Heart left ventricle (tissue), 16 donors: ENCODE measurements at regions of chr12 and their contacts with region 1.

Region 1: GRCh38 chr12:81077686-81078441 is at the start of gene ACSS3:
- DNase-seq: peak; percentile 71 to 82 (median 78)
- ATAC-seq: peak; percentile 85 to 90 (median 90)
- H3K4me3 ChIP-seq: peak within 1 kb of the TSS; percentile 59 to 93 (median 86)
- H3K27ac ChIP-seq: peak within 1 kb of the TSS; percentile 72 to 98 (median 92)
- H3K4me1 ChIP-seq: peaks cover 0 to 28% (median 8%) of the 10 kb centered on the region in 12 donors
- H3K27me3 ChIP-seq: no peaks in the 10 kb centered on the region
- CTCF ChIP-seq: no peak
- POLR2A ChIP-seq: peak in 1 of 2 donors; percentile 50
- total RNA-seq, gene ACSS3: 19.3 to 36.0 (median 28.9) TPM

Region 2: DNA sequence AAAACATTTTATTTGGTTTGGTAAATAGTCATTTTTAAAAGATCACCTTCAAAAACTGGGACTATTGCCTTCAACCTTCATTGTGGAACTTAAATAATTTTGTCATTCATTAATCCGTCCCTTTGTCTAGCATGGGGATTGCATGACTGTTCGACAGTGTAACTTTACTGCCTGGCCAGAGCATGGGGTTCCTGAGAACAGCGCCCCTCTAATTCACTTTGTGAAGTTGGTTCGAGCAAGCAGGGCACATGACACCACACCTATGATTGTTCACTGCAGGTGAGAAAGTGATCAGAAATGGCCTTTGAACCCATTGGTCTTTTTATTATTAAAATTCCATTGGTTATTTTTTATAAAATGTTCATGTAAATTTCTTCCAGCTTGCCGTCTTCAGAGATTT is 407.6 kb before region 1 on chr12:
- intact Hi-C with region 1: no loop called
- DNase-seq: no peak
- ATAC-seq: no peak
- H3K4me3 ChIP-seq: no peak overlapping the region
- H3K27ac ChIP-seq: no peak overlapping the region
- H3K4me1 ChIP-seq: no peaks in the 10 kb centered on the region
- H3K27me3 ChIP-seq: no peaks in the 10 kb centered on the region
- CTCF ChIP-seq: no peak
- POLR2A ChIP-seq: no peak

Region 3: GRCh38 chr12:80821513-80822000 is 256.3 kb before region 1 on chr12:
- intact Hi-C with region 1: loop called in 1 of 10 experiments (anchors 5 kb)
- DNase-seq: peak in 1 of 5 donors; percentile 51
- ATAC-seq: peak in 3 of 4 donors; percentile 43 to 72 (median 58)
- H3K4me3 ChIP-seq: no peak overlapping the region
- H3K27ac ChIP-seq: peak overlapping the region in 3 of 12 donors; percentile 11 to 43 (median 19)
- H3K4me1 ChIP-seq: peaks cover 0 to 24% (median 4%) of the 10 kb centered on the region in 12 donors
- H3K27me3 ChIP-seq: no peaks in the 10 kb centered on the region
- CTCF ChIP-seq: no peak
- POLR2A ChIP-seq: no peak

Region 4: GRCh38 chr12:80837348-80837985 is 240.4 kb before region 1 on chr12:
- intact Hi-C with region 1: loop called in 1 of 10 experiments (anchors 10 kb)
- DNase-seq: peak in 1 of 5 donors; percentile 20
- ATAC-seq: peak; percentile 71 to 94 (median 79)
- H3K4me3 ChIP-seq: no peak overlapping the region
- H3K27ac ChIP-seq: peak overlapping the region in 1 of 12 donors; percentile 32
- H3K4me1 ChIP-seq: peaks cover 0 to 21% (median 7%) of the 10 kb centered on the region in 12 donors
- H3K27me3 ChIP-seq: no peaks in the 10 kb centered on the region
- CTCF ChIP-seq: peak; percentile 51 to 78 (median 68)
- POLR2A ChIP-seq: no peak

Region 5: DNA sequence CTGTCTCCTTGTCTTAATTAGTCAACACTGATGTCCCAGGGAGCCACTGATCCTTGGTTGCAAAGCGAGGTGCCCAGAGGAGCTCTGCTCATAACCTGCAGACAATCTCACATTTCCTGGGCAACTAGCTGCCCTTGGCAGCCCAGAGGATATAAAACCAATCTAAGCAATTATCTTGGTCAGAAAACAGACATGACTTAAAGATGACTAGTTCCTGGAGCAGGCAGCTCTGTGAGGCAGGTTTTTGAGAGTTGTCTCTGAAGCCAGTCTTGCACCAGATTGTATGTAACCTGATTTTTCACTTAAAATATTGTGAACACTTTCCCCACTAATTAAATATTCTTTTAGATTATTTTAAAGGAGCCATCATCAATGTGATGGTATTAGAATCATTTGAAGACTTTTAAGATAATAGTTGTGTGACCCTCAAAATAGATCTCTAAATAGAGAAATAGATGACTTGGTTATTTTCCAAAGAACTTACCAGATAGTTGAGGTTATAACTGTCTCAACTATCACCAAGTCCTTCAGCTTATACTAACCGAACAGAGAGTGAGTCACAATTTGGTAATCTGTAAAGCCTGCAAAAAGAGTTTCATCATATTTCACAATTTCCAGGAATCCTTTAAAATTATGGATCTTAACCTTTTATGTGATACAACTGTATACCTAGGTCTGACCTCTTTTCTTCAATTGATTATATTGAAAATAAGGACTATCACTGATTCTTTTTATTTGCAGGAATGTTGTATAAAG is 216.1 kb before region 1 on chr12:
- intact Hi-C with region 1: no loop called
- DNase-seq: no peak
- ATAC-seq: peak in 1 of 4 donors; percentile 45
- H3K4me3 ChIP-seq: no peak overlapping the region
- H3K27ac ChIP-seq: no peak overlapping the region
- H3K4me1 ChIP-seq: peaks cover 0 to 19% (median 4%) of the 10 kb centered on the region in 12 donors
- H3K27me3 ChIP-seq: no peaks in the 10 kb centered on the region
- CTCF ChIP-seq: no peak
- POLR2A ChIP-seq: no peak

Region 6: GRCh38 chr12:80936498-80937390 is 141.1 kb before region 1 on chr12:
- intact Hi-C with region 1: loop called in 4 of 10 experiments (anchors 1 to 10 kb)
- DNase-seq: peak; percentile 32 to 73 (median 49)
- ATAC-seq: peak; percentile 68 to 85 (median 80)
- H3K4me3 ChIP-seq: peak overlapping the region; percentile 70 to 87 (median 78)
- H3K27ac ChIP-seq: peak overlapping the region; percentile 90 to 97 (median 95)
- H3K4me1 ChIP-seq: peaks cover 0 to 18% (median 8%) of the 10 kb centered on the region in 12 donors
- H3K27me3 ChIP-seq: peaks cover 0 to 3% (median 0%) of the 10 kb centered on the region in 9 donors
- CTCF ChIP-seq: peak in 1 of 12 donors; percentile 11
- POLR2A ChIP-seq: no peak

Region 7: GRCh38 chr12:81000831-81001230 is 77.0 kb before region 1 on chr12:
- intact Hi-C with region 1: no loop called
- DNase-seq: no peak
- ATAC-seq: no peak
- H3K4me3 ChIP-seq: no peak overlapping the region
- H3K27ac ChIP-seq: no peak overlapping the region
- H3K4me1 ChIP-seq: peaks cover 0 to 5% (median 0%) of the 10 kb centered on the region in 12 donors
- H3K27me3 ChIP-seq: no peaks in the 10 kb centered on the region
- CTCF ChIP-seq: no peak
- POLR2A ChIP-seq: no peak

Region 8: DNA sequence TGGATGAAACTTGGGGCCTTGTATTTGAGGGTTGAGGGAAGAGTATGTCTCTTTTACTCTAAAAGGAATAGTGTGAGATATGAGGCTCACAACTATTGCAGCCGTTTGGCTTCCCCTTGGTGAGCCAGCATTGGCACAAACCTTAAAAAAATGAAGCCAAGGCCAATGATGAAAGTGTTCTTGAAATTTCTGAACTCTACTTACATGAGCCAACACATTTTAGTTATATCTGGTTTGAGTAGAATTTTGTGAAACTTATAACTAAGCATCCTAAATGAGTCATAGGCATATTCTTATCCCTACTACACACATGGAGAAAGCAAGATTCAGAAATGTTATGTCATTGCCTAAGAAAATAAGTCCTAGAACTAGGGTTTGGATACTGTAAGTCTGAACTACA is 55.3 kb before region 1 on chr12:
- intact Hi-C with region 1: loop called in 1 of 10 experiments (anchors 5 kb)
- DNase-seq: no peak
- ATAC-seq: peak in 3 of 4 donors; percentile 21 to 70 (median 56)
- H3K4me3 ChIP-seq: no peak overlapping the region
- H3K27ac ChIP-seq: no peak overlapping the region
- H3K4me1 ChIP-seq: peaks cover 0 to 8% (median 0%) of the 10 kb centered on the region in 12 donors
- H3K27me3 ChIP-seq: no peaks in the 10 kb centered on the region
- CTCF ChIP-seq: no peak
- POLR2A ChIP-seq: no peak